ENCODE measurements at regions of chr9 and their contacts with region 1.

Region 1: GRCh38 chr9:10059044-10059443 is 553.8 kb downstream of the PTPRD start:
- DNase-seq: no peak
- ATAC-seq: no peak
- H3K4me3 ChIP-seq: no peak overlapping the region
- H3K4me3 Mint-ChIP-seq: no peak overlapping the region
- H3K27ac ChIP-seq: no peak overlapping the region
- H3K27ac Mint-ChIP-seq: no peak overlapping the region
- H3K4me1 ChIP-seq: no peaks in the 10 kb centered on the region
- H3K4me1 Mint-ChIP-seq: no peaks in the 10 kb centered on the region
- H3K27me3 ChIP-seq: no peaks in the 10 kb centered on the region
- H3K27me3 Mint-ChIP-seq: no peaks in the 10 kb centered on the region
- CTCF ChIP-seq: no peak

Region 2: GRCh38 chr9:9992936-9993335 is 66.1 kb before region 1 on chr9:
- CTCF ChIA-PET with region 1: no interaction called
- POLR2A ChIA-PET with region 1: no interaction called
- intact Hi-C with region 1: no loop called
- DNase-seq: no peak
- ATAC-seq: no peak
- H3K4me3 ChIP-seq: no peak overlapping the region
- H3K4me3 Mint-ChIP-seq: no peak overlapping the region
- H3K27ac ChIP-seq: no peak overlapping the region
- H3K27ac Mint-ChIP-seq: no peak overlapping the region
- H3K4me1 ChIP-seq: no peaks in the 10 kb centered on the region
- H3K4me1 Mint-ChIP-seq: no peaks in the 10 kb centered on the region
- H3K27me3 ChIP-seq: no peaks in the 10 kb centered on the region
- H3K27me3 Mint-ChIP-seq: no peaks in the 10 kb centered on the region
- CTCF ChIP-seq: no peak

Region 3: GRCh38 chr9:10268531-10269485 is 209.8 kb after region 1 on chr9:
- CTCF ChIA-PET with region 1: interaction called, 12 read pairs
- POLR2A ChIA-PET with region 1: no interaction called
- intact Hi-C with region 1: no loop called
- DNase-seq: peak; percentile 54
- ATAC-seq: peak; percentile 45
- H3K4me3 ChIP-seq: no peak overlapping the region
- H3K4me3 Mint-ChIP-seq: no peak overlapping the region
- H3K27ac ChIP-seq: no peak overlapping the region
- H3K27ac Mint-ChIP-seq: no peak overlapping the region
- H3K4me1 ChIP-seq: peaks cover 0 to 5% of the 10 kb centered on the region in 2 donors
- H3K4me1 Mint-ChIP-seq: peaks cover 4% of the 10 kb centered on the region
- H3K27me3 ChIP-seq: no peaks in the 10 kb centered on the region
- H3K27me3 Mint-ChIP-seq: no peaks in the 10 kb centered on the region
- CTCF ChIP-seq: peak; percentile 34

Region 4: DNA sequence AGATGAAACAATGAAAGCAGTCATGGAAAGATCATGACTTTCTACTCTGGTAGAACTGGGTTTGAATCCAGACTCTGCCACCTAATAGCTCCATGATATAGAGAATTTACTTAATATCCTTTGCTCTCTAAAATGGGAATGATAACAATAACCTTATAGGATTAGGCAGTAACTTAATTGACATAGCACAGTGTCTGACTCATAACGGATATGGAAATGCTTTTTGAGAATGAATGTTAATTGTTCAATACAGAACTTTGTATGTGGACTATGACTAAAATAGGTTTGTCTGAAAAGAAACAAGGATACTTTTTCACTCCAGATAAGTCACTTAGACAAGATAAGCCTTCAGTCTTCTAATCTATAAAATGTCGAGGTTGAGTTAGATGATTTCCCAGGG is 223.0 kb after region 1 on chr9:
- CTCF ChIA-PET with region 1: no interaction called
- POLR2A ChIA-PET with region 1: no interaction called
- intact Hi-C with region 1: no loop called
- DNase-seq: no peak
- ATAC-seq: no peak
- H3K4me3 ChIP-seq: no peak overlapping the region
- H3K4me3 Mint-ChIP-seq: no peak overlapping the region
- H3K27ac ChIP-seq: no peak overlapping the region
- H3K27ac Mint-ChIP-seq: no peak overlapping the region
- H3K4me1 ChIP-seq: no peaks in the 10 kb centered on the region
- H3K4me1 Mint-ChIP-seq: no peaks in the 10 kb centered on the region
- H3K27me3 ChIP-seq: peaks cover 0 to 3% (median 0%) of the 10 kb centered on the region in 4 experiments
- H3K27me3 Mint-ChIP-seq: no peaks in the 10 kb centered on the region
- CTCF ChIP-seq: no peak

Region 5: DNA sequence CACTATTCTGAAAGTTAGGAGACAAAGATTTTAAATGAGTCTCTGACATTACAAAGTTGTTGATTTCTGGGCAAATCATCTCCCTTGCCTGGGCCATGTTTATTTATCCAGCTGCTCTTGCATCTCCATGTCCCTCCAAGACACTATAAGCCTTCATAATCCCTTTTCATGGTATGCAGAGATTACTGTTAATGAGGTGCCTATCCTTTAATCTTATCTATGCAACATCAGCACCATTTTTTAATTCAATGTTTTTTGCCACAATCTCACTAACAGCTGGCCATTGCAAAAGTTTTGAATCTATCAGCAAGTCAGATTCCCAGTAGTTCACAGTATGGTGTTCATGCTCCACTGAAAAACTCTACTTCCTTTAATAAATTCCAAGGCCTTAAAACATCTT is 662.3 kb after region 1 on chr9:
- CTCF ChIA-PET with region 1: no interaction called
- POLR2A ChIA-PET with region 1: no interaction called
- intact Hi-C with region 1: no loop called
- DNase-seq: no peak
- ATAC-seq: no peak
- H3K4me3 ChIP-seq: no peak overlapping the region
- H3K4me3 Mint-ChIP-seq: no peak overlapping the region
- H3K27ac ChIP-seq: no peak overlapping the region
- H3K27ac Mint-ChIP-seq: no peak overlapping the region
- H3K4me1 ChIP-seq: no peaks in the 10 kb centered on the region
- H3K4me1 Mint-ChIP-seq: no peaks in the 10 kb centered on the region
- H3K27me3 ChIP-seq: no peaks in the 10 kb centered on the region
- H3K27me3 Mint-ChIP-seq: no peaks in the 10 kb centered on the region
- CTCF ChIP-seq: no peak

Measured in B cell (primary cell).